ENCODE measurements at regions of chr5 and their contacts with region 1.

Region 1: DNA sequence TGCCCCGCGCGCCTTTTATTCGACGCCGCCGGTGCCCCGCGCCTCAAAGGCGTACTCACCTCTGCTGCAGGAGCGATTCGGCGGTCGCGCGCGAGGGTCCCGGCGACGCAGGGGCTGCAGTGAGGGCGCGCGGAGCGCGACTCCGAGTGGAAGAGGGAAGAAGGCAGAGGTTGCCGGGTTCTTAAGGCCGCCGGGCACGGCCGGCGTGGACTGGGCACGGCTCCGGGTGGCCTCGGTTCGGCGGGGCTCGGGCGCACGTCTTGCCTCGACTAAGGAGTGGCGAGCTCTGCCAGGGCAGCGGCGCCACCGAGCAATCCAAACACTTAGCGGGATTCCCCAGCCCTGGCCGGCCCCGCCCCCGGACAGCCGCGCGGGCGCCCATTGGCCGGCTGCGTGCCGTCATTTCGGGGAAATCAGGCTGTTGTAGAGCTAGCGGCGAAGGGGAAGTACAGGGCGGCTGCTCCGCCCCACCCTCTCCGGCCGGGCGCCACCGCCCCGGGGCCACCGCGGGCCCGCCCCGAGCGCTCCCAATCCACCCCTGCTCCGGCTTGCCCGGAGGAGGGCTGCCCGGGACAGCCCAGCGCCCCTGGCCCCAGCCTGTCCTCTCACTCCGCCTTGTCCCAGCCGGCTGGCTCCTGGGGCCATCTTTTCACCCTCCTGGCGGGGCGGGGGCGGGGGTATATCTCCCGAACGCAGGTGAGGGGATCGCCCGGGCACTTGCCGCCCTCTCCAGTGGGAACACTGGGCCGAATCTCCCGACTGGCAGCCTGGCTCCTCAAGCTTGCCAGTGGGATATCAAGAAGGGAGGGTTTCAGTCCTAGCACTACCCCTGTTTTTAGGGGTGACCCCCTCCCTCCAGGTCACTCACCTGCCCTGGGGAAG is at the start of gene IRF1:
- DNase-seq: peak; percentile 99
- H3K4me3 Mint-ChIP-seq: peak within 1 kb of the TSS; percentile 91
- H3K27ac Mint-ChIP-seq: peak within 1 kb of the TSS; percentile 92
- H3K4me1 Mint-ChIP-seq: peaks cover 68% of the 10 kb centered on the region
- H3K27me3 Mint-ChIP-seq: no peaks in the 10 kb centered on the region
- total RNA-seq, gene IRF1: 231 to 239 TPM

Region 2: GRCh38 chr5:132394667-132395259 is 96.0 kb before region 1 on chr5:
- CTCF ChIA-PET with region 1: interaction called, 333 read pairs
- POLR2A ChIA-PET with region 1: interaction called, 138 read pairs
- DNase-seq: no peak
- H3K4me3 Mint-ChIP-seq: no peak overlapping the region
- H3K27ac Mint-ChIP-seq: no peak overlapping the region
- H3K4me1 Mint-ChIP-seq: peaks cover 68% of the 10 kb centered on the region
- H3K27me3 Mint-ChIP-seq: no peaks in the 10 kb centered on the region

Region 3: GRCh38 chr5:132419502-132420468 is 70.9 kb before region 1 on chr5:
- CTCF ChIA-PET with region 1: interaction called, 66 read pairs
- POLR2A ChIA-PET with region 1: interaction called, 1,155 read pairs
- DNase-seq: peak; percentile 72
- H3K4me3 Mint-ChIP-seq: peak overlapping the region; percentile 65
- H3K27ac Mint-ChIP-seq: peak overlapping the region; percentile 91
- H3K4me1 Mint-ChIP-seq: peaks cover 95% of the 10 kb centered on the region
- H3K27me3 Mint-ChIP-seq: no peaks in the 10 kb centered on the region

Region 4: GRCh38 chr5:132437604-132438266 is 53.0 kb before region 1 on chr5:
- CTCF ChIA-PET with region 1: interaction called, 5 read pairs
- POLR2A ChIA-PET with region 1: interaction called, 1,155 read pairs
- DNase-seq: peak; percentile 72
- H3K4me3 Mint-ChIP-seq: peak overlapping the region; percentile 54
- H3K27ac Mint-ChIP-seq: peak overlapping the region; percentile 87
- H3K4me1 Mint-ChIP-seq: peaks cover 82% of the 10 kb centered on the region
- H3K27me3 Mint-ChIP-seq: no peaks in the 10 kb centered on the region

Region 5: DNA sequence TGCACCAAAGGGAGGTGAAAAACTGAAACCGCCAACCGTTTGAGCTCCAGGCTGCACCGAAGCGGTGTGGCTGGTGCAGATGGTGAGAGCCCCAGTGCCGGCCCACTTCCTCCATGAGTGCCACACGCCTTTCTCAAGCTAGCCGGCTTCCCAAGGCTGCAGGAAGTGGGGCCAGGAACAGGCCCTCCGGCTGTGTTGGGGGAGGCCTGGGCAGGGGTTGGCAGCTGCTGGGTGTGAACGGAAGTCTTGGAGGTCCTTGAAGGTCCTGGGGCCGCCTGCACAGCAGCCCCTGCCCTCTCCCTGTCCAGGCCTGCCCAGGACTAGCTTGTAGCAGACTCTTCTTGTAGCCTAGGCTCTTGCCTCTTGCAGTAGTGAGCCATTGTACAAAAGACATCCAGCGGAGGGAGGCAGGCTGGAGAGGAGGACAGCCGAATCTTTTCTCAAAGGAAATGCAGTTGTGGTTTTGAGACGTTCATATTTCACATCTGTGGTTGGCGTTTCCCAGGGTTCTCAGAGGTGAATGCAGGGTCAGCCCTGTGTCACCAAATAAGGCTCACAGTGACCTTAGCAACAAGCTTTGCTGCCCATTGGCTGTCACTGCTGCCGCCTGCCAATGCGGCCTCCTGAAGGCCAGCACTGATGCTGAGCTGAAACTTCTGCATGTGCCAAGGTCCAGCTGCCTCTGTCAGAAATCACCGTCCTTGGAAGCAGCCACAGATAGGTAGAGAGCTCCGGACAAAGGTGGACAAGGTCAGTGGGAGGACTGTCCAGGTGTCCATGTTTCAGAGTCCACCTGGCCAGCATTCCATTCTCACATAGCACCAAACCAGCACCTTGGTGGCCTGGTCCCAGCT is 24.1 kb before region 1 on chr5:
- CTCF ChIA-PET with region 1: interaction called, 33 read pairs
- POLR2A ChIA-PET with region 1: interaction called, 1,032 read pairs
- DNase-seq: peak; percentile 88
- H3K4me3 Mint-ChIP-seq: peak overlapping the region; percentile 67
- H3K27ac Mint-ChIP-seq: peak overlapping the region; percentile 91
- H3K4me1 Mint-ChIP-seq: peaks cover 95% of the 10 kb centered on the region
- H3K27me3 Mint-ChIP-seq: no peaks in the 10 kb centered on the region

Region 6: GRCh38 chr5:132479111-132479951 is 11.4 kb before region 1 on chr5:
- CTCF ChIA-PET with region 1: interaction called, 41 read pairs
- POLR2A ChIA-PET with region 1: interaction called, 1,032 read pairs
- DNase-seq: no peak
- H3K4me3 Mint-ChIP-seq: no peak overlapping the region
- H3K27ac Mint-ChIP-seq: peak overlapping the region; percentile 58
- H3K4me1 Mint-ChIP-seq: peaks cover 87% of the 10 kb centered on the region
- H3K27me3 Mint-ChIP-seq: no peaks in the 10 kb centered on the region

Region 7: GRCh38 chr5:132556763-132557477 is 66.2 kb after region 1 on chr5 and contains the start of gene RAD50:
- CTCF ChIA-PET with region 1: no interaction called
- POLR2A ChIA-PET with region 1: interaction called, 12 read pairs
- DNase-seq: peak; percentile 96
- H3K4me3 Mint-ChIP-seq: peak within 1 kb of the TSS; percentile 96
- H3K27ac Mint-ChIP-seq: peak within 1 kb of the TSS; percentile 83
- H3K4me1 Mint-ChIP-seq: peaks cover 28% of the 10 kb centered on the region
- H3K27me3 Mint-ChIP-seq: no peaks in the 10 kb centered on the region
- total RNA-seq, gene RAD50: 35.6 to 38.9 TPM